ENCODE measurements at regions of chr11 and their contacts with region 1.

Region 1: DNA sequence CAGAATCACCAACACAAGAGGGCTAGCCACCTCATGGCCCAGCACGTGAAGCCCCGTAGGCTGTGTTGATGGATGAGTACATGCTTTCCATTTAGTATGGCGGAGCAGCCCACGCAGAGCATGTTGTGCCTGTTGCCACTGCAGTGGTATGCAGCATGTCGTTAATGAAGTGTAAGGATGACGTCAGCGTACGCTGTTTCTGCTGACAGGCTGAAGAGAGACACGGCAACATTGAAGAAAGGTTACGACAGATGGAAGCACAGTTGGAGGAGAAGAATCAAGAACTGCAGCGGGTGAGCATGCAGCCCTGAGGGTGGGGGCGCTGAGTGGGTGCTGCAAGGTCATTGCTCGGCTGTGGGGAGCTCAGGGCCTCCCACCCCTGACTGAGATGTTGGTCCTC is 62.8 kb downstream of the PPFIA1 start:
- DNase-seq: no peak
- H3K4me3 ChIP-seq: no peak overlapping the region
- H3K27ac ChIP-seq: no peak overlapping the region
- H3K4me1 ChIP-seq: no peaks in the 10 kb centered on the region
- H3K27me3 ChIP-seq: no peaks in the 10 kb centered on the region
- CTCF ChIP-seq: no peak

Region 2: GRCh38 chr11:70233034-70233995 is 99.9 kb before region 1 on chr11:
- CTCF ChIA-PET with region 1: no interaction called
- dilution Hi-C with region 1: no loop called
- in situ Hi-C with region 1: no loop called
- intact Hi-C with region 1: loop called (anchors 5 kb)
- DNase-seq: peak; percentile 100
- H3K4me3 ChIP-seq: no peak overlapping the region
- H3K27ac ChIP-seq: peak overlapping the region; percentile 77
- H3K4me1 ChIP-seq: peaks cover 13% of the 10 kb centered on the region
- H3K27me3 ChIP-seq: peaks cover 5% of the 10 kb centered on the region
- CTCF ChIP-seq: no peak